PC-3 (cell line): ENCODE measurements at regions of chr17 and their contacts with region 1.

Region 1: DNA sequence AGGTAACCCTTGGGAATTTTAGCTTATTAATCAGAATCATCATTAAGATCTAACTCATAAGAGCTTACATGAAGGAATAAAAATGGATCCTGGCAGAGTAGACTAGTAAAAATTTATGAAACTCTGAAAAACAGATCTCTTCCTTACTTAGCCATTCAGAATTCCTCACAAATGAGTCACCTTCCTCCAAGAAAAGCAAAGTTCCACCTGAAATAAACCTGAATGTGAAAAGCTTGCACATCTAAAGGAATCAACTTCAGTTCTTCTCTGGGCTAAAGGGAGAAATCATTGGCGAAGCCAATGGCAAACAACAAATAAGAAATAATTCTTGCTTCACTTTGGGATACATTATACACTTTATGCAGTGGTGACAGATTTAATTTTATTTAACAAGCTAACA is 22.7 kb downstream of the MYO1D start:
- DNase-seq: peak; percentile 63
- ATAC-seq: peak; percentile 73
- H3K4me3 ChIP-seq: peak overlapping the region; percentile 39
- H3K27ac ChIP-seq: peak overlapping the region; percentile 65
- H3K4me1 ChIP-seq: peaks cover 32% of the 10 kb centered on the region
- H3K27me3 ChIP-seq: no peaks in the 10 kb centered on the region
- CTCF ChIP-seq: no peak

Region 2: DNA sequence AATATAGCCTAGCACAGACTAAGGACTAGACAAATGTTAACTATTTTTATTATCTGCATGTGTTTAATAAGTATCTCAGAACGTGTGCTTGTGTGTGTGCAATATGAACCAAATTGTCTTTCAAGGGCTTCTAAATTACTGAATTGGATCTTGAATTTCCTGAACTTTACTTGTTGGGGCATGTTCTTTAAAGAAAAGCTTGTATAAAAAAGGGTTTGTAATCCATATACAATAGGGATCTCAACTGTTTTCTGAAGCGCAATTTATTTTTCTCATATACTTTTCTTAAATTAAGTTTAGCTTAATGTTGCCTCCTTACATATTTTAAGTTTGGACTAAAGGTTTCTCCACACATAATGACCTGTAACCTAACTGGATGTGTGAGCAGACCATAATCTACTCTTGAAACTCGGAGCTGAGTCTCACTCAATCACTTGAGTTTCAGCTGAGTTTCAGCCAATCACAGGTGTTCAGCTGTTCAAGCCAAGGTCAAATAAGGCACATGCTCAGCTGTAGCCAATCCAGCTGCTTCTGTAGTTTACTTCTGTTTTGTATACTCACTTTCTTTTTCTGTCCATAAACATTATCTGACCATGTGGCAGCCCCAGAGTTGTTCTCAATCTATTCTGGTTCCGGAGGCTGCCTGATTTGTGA is 295.1 kb before region 1 on chr17:
- CTCF ChIA-PET with region 1: no interaction called
- POLR2A ChIA-PET with region 1: no interaction called
- intact Hi-C with region 1: no loop called
- DNase-seq: no peak
- ATAC-seq: no peak
- H3K4me3 ChIP-seq: no peak overlapping the region
- H3K27ac ChIP-seq: no peak overlapping the region
- H3K4me1 ChIP-seq: peaks cover 3% of the 10 kb centered on the region
- H3K27me3 ChIP-seq: no peaks in the 10 kb centered on the region
- CTCF ChIP-seq: no peak

Region 3: DNA sequence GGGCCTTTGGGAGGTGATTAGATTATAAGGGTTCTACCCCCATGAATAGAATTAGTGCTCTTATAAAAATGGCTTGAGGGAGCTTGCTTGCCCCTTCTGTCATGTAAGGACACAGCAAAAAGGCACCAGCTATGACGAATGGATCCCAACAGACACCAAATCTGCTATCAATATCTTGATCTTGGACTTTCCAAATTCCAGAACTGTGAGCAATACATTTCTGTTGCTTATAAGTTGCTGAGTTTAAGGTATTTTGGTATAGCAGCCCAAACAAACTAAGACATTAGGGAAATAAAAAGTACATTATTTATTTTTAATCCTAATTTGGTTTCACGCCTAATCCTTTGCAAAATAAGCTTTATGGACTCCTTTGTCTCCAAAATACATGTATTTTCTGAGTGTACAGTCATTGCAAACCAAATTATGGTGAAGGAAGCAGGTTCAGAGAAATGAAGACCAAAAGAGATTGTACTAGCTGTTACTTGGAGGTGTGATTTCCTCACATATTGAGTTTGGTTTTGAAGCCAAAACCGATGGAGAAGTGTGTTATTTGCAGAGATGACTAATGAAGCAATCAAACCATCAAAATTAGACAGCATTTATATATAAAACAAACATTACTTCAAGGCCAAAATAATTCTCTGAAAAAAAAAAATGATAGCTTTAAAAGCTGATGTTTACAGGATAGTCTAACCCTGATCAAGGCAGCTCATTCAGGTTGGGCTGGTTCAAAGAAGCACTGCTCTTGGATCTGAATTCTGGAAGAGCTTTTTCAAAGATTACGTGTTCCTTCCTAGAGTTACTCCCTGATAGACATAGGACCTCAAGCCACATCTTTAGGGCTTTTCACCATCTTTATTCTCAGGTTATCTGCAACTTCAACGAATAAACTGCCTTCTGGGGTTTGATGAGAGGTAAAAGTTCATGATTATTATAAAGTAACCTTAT is 48.9 kb before region 1 on chr17:
- CTCF ChIA-PET with region 1: no interaction called
- POLR2A ChIA-PET with region 1: no interaction called
- intact Hi-C with region 1: loop called (anchors 2 kb)
- DNase-seq: peak; percentile 62
- ATAC-seq: peak; percentile 19
- H3K4me3 ChIP-seq: no peak overlapping the region
- H3K27ac ChIP-seq: peak overlapping the region; percentile 73
- H3K4me1 ChIP-seq: peaks cover 46% of the 10 kb centered on the region
- H3K27me3 ChIP-seq: no peaks in the 10 kb centered on the region
- CTCF ChIP-seq: no peak

Region 4: DNA sequence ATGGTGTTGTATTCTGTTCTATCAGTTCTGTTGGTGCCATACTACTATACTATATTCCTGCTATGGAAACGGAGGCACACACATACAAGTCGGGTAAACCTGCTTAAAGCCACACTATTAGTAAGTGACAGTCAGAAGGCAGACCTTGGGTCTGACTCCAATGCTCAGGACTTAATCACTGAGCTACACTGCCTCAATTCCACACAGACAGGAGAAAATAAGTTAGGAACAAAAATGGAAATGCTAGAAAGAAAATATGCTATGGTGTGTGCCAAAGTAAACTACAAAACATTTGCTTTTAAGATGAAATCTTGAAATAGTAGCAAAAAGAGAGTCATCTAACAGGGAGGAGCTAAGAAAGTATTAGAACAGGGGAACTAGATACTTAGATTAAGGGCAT is 25.4 kb before region 1 on chr17:
- CTCF ChIA-PET with region 1: no interaction called
- POLR2A ChIA-PET with region 1: no interaction called
- intact Hi-C with region 1: loop called (anchors 2 kb)
- DNase-seq: no peak
- ATAC-seq: peak; percentile 11
- H3K4me3 ChIP-seq: peak overlapping the region; percentile 55; the same call in 1 of the 2 replicates
- H3K27ac ChIP-seq: no peak overlapping the region
- H3K4me1 ChIP-seq: peaks cover 12% of the 10 kb centered on the region
- H3K27me3 ChIP-seq: no peaks in the 10 kb centered on the region
- CTCF ChIP-seq: no peak

Region 5: DNA sequence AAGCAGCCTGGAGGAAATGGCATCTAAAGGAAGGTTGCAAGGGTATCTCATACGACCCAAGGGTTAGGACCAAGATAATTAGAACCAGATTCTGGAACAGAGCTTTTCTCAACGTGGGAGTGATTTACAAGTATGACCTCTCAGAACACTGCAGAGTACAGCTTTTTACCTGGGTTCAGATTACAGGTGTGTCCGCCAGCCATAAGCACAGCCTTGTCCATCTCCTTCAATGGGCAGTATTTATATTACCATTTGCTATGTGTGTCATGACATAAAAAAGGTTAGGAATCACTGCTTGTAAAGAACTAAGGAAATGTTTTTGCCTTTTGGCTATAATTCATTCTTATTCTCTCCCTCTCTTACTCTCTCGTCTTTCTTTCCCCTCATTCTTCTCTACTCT is 14.0 kb before region 1 on chr17:
- CTCF ChIA-PET with region 1: no interaction called
- POLR2A ChIA-PET with region 1: no interaction called
- intact Hi-C with region 1: no loop called
- DNase-seq: no peak
- ATAC-seq: no peak
- H3K4me3 ChIP-seq: no peak overlapping the region
- H3K27ac ChIP-seq: no peak overlapping the region
- H3K4me1 ChIP-seq: no peaks in the 10 kb centered on the region
- H3K27me3 ChIP-seq: no peaks in the 10 kb centered on the region
- CTCF ChIP-seq: no peak

Region 6: DNA sequence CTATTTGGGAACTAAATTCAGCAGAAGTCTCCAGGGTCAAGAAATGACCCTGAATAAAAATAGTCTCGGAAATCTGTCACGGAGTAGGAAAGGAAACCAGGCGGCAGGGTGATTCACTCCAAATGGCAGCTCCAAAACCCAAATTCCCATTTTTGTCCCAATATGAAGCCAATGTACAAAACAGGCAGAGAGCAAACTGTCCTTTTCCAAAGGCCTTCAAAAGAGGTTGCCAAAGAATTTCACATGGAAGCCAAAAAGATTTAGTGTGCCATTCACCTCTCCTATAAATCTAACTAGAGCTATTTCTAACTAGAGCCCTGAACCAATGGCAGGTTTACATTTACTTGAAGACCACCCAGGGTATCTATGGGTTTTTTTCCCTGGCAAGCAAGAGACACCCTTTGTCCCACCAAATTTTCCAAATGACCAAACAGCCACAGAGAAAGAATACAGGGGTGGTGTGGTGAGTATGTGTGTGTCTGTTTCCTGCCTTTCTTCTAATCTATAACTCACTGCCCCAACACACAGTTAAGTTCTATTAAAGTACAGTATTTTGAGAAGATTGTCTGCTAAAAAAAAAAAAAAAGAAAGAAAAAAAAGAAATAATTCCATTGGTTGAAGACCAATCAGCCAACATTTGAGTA is 15.9 kb after region 1 on chr17:
- CTCF ChIA-PET with region 1: no interaction called
- POLR2A ChIA-PET with region 1: no interaction called
- intact Hi-C with region 1: loop called (anchors 1 kb)
- DNase-seq: no peak
- ATAC-seq: no peak
- H3K4me3 ChIP-seq: no peak overlapping the region
- H3K27ac ChIP-seq: no peak overlapping the region
- H3K4me1 ChIP-seq: peaks cover 25% of the 10 kb centered on the region
- H3K27me3 ChIP-seq: no peaks in the 10 kb centered on the region
- CTCF ChIP-seq: no peak